T-cell (primary cell): ENCODE measurements at regions of chr17 and their contacts with region 1.

Region 1: DNA sequence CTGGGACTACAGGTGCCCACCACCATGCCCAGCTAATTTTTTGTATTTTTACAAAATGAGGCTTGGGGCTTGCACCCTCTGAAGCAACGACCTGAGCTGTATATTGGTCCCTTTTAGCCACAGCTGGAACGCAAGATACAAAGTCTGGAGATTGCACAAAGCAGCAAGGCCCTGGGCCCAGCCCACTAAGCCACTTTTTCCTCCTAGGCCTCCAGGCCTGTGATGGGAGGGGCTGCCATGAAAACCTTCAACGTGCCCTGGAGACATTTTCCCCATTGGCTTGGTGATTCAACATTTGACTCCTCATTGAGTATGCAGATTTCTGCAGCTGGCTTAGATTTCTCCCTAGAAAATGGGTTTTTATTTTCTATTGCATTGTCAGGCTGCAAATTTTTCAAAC is 69.2 kb downstream of the CYB561 start:
- DNase-seq: no peak
- ATAC-seq: no peak
- H3K4me3 ChIP-seq: no peak overlapping the region
- H3K4me3 Mint-ChIP-seq: no peak overlapping the region
- H3K27ac ChIP-seq: no peak overlapping the region
- H3K27ac Mint-ChIP-seq: no peak overlapping the region
- H3K4me1 ChIP-seq: no peaks in the 10 kb centered on the region
- H3K4me1 Mint-ChIP-seq: no peaks in the 10 kb centered on the region
- H3K27me3 ChIP-seq: no peaks in the 10 kb centered on the region
- H3K27me3 Mint-ChIP-seq: no peaks in the 10 kb centered on the region

Region 2: GRCh38 chr17:63362115-63362514 is 14.8 kb before region 1 on chr17:
- CTCF ChIA-PET with region 1: no interaction called
- POLR2A ChIA-PET with region 1: interaction called in 1 of 2 experiments, 10 read pairs
- DNase-seq: no peak
- ATAC-seq: no peak
- H3K4me3 ChIP-seq: no peak overlapping the region
- H3K4me3 Mint-ChIP-seq: no peak overlapping the region
- H3K27ac ChIP-seq: no peak overlapping the region
- H3K27ac Mint-ChIP-seq: no peak overlapping the region
- H3K4me1 ChIP-seq: no peaks in the 10 kb centered on the region
- H3K4me1 Mint-ChIP-seq: no peaks in the 10 kb centered on the region
- H3K27me3 ChIP-seq: no peaks in the 10 kb centered on the region
- H3K27me3 Mint-ChIP-seq: no peaks in the 10 kb centered on the region

Region 3: GRCh38 chr17:63445979-63446691 is 69.2 kb after region 1 on chr17 and contains the start of gene CYB561:
- CTCF ChIA-PET with region 1: no interaction called
- POLR2A ChIA-PET with region 1: no interaction called
- DNase-seq: peak in 34 of 35 experiments; percentile 27 to 83 (median 46)
- ATAC-seq: peak; percentile 61 to 75 (median 70)
- H3K4me3 ChIP-seq: peak within 1 kb of the TSS; percentile 71 to 80
- H3K4me3 Mint-ChIP-seq: peak within 1 kb of the TSS; percentile 70 to 82 (median 76)
- H3K27ac ChIP-seq: peak within 1 kb of the TSS; percentile 96
- H3K27ac Mint-ChIP-seq: peak within 1 kb of the TSS; percentile 92 to 95
- H3K4me1 ChIP-seq: peaks cover 12 to 43% of the 10 kb centered on the region in 2 experiments
- H3K4me1 Mint-ChIP-seq: peaks cover 26 to 50% (median 27%) of the 10 kb centered on the region in 3 donors
- H3K27me3 ChIP-seq: peaks cover 2 to 15% of the 10 kb centered on the region in 2 experiments
- H3K27me3 Mint-ChIP-seq: no peaks in the 10 kb centered on the region
- total RNA-seq, gene CYB561: 15.5 to 64.1 (median 34.0) TPM